Heart right ventricle (tissue), 16 donors: ENCODE measurements at regions of chr7 and their contacts with region 1.

Region 1: DNA sequence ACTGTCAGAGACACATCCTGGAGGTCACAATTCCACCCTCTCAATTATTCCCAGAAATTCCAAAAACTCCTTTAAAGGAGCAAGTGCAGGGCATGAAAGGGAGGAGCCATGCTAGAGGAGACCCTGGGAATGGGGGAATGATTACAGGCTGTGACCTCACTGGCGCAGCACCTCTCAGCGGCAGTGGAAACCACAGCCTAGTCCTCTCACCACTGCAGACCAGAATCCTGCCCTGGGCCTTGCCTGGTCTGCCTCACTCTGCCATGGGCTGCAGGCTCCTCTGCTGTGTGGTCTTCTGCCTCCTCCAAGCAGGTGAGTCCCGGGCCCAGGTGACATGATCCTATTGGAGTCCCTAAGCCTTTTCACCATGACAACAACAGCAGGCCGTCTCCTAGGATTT is 50.5 kb upstream of the PRSS58 start:
- DNase-seq: no peak
- ATAC-seq: peak in 2 of 8 donors; percentile 21 to 30
- H3K4me3 ChIP-seq: no peak overlapping the region
- H3K27ac ChIP-seq: no peak overlapping the region
- H3K4me1 ChIP-seq: no peaks in the 10 kb centered on the region
- H3K27me3 ChIP-seq: peaks cover 0 to 9% (median 0%) of the 10 kb centered on the region in 7 donors
- CTCF ChIP-seq: no peak

Region 2: DNA sequence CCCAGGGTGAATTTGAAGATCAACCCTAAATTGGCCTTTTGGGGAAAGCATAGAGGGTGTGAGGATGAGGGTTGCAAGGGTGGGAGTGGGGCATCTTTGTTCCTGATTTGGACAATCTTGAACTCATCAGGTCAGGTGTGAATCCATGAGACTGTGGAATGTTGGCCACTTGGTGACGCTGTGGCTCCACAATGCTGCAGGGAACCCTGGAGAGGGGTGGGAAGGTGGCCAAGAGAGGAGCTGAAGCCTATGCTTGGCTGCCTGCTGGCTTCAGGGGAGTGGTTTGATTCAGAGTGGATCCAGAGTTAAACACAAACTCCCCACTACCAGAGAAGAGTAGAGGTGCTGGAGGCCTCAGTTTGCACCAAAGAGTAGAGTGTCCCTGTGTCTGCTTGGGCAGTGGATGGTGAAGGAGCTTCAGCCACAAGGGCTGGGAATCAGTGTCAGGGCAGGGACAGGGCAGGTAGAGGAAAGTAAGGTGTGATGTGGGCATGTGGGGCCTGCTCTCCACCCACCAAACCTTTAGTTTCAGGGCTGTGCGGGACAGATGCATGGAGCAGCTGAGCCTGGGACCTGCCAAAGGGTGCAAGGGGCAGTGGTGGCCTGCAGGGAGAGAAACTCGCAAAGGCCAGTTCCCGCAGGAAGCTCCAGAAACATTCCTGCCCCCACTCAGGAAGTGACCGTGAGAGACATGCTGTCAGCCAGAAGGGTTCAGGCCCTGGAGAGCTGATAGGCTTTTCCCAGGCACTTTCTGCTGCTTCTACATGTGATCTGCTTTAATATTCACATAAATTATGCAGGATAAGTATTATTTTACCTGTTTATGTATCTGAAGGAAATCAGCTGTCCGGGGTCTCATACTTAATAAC is 30.5 kb after region 1 on chr7:
- intact Hi-C with region 1: loop called in 3 of 10 experiments (anchors 2 kb)
- DNase-seq: peak in 1 of 2 donors; percentile 33
- ATAC-seq: peak in 4 of 8 donors; percentile 38 to 54 (median 42)
- H3K4me3 ChIP-seq: no peak overlapping the region
- H3K27ac ChIP-seq: no peak overlapping the region
- H3K4me1 ChIP-seq: no peaks in the 10 kb centered on the region
- H3K27me3 ChIP-seq: peaks cover 0 to 8% (median 3%) of the 10 kb centered on the region in 7 donors
- CTCF ChIP-seq: peak in 5 of 9 donors; percentile 14 to 29 (median 15)

Region 3: DNA sequence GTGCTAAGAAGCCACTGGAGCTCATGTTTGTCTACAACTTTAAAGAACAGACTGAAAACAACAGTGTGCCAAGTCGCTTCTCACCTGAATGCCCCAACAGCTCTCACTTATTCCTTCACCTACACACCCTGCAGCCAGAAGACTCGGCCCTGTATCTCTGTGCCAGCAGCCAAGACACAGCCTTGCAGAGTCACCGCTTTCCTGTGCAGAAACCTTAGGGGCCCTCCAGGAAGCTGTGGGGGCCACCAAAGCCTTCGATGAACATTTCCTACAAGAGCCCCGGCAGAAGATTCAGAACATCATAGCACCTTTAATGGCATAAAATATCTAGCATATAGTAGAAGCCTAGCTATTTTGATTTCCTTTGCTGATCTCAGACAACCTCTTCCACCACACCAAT is 37.5 kb after region 1 on chr7:
- intact Hi-C with region 1: loop called in 3 of 10 experiments (anchors 2 kb)
- DNase-seq: no peak
- ATAC-seq: no peak
- H3K4me3 ChIP-seq: no peak overlapping the region
- H3K27ac ChIP-seq: no peak overlapping the region
- H3K4me1 ChIP-seq: no peaks in the 10 kb centered on the region
- H3K27me3 ChIP-seq: peaks cover 0 to 35% (median 17%) of the 10 kb centered on the region in 7 donors
- CTCF ChIP-seq: no peak